B cell (primary cell): ENCODE measurements at regions of chr2 and their contacts with region 1.

Region 1: DNA sequence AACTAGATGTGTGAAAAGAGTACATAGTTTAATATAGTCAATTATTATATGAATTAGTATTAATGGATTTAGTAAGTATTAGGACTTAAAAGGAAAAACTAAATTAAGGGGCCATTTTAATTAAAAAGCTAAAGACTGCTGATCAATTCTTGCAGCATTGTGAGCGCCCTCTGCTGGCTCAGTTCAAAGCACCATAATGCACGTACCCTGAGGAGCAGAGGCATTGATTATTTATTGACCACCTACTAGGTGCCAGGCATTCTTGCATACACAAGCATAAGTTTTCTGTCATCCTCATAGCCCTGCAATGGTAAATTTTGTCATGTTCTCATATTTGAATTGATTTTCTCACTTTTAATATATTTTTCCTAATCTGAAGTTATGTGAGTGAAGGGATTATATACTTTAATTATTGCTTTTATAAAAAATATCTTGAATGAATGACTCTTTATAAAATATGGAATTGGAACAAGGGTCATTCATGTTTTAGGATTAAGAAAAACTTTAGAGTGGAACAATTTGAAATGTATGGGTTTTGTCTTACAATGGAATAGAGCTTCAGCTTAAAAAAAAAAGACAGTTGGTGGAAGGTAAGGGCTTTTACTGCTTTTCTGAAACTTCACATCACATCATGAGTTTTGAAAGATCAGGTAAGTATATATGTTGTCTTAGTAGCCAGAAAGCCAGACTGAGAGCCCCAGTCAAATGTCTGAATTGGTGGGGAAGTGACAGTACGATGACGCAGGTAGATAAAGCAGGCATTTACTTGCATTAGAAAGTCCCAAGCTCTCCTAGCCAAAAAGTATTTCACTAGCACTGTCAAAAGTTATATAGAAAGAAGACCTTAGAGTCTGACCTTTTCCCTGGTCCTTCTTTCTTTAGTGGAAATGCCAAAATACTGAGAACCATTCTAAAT is 9.7 kb downstream of the ITGA4 start:
- DNase-seq: peak; percentile 84
- ATAC-seq: peak; percentile 52
- H3K4me3 ChIP-seq: no peak overlapping the region
- H3K4me3 Mint-ChIP-seq: no peak overlapping the region
- H3K27ac ChIP-seq: peak overlapping the region in 1 of 2 donors; percentile 69
- H3K27ac Mint-ChIP-seq: no peak overlapping the region
- H3K4me1 ChIP-seq: peaks cover 56 to 81% of the 10 kb centered on the region in 2 donors
- H3K4me1 Mint-ChIP-seq: peaks cover 87% of the 10 kb centered on the region
- H3K27me3 ChIP-seq: no peaks in the 10 kb centered on the region
- H3K27me3 Mint-ChIP-seq: no peaks in the 10 kb centered on the region
- CTCF ChIP-seq: peak; percentile 91

Region 2: DNA sequence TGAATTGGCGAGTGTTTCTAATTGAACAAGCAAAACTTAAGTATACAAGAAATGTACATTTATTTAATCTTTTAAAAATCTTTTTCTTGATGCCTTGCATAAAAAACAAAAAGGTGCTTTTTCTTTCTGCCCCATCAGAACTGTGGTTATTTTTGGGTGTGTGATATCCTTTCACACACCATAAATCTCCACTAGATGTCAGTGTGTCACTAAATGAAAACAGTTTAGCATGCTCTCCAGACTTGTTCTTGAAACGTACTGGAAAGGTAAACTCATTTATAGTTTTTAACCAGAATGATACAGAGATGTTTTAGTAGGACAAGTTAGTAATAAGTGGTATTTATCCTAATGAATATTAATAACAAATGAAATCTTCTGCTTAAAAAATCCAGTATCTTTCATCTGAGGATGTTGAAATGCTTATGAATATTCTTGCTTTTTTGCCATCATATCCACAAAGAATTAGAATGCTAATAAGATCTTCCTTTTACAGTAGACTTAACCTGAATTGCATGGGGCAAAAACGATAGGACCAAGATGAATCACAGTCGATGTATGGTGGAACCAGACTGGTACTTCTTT is 389.7 kb before region 1 on chr2:
- CTCF ChIA-PET with region 1: interaction called, 8 read pairs
- POLR2A ChIA-PET with region 1: no interaction called
- intact Hi-C with region 1: loop called (anchors 1 kb)
- DNase-seq: peak; percentile 70
- ATAC-seq: peak; percentile 65
- H3K4me3 ChIP-seq: no peak overlapping the region
- H3K4me3 Mint-ChIP-seq: no peak overlapping the region
- H3K27ac ChIP-seq: no peak overlapping the region
- H3K27ac Mint-ChIP-seq: no peak overlapping the region
- H3K4me1 ChIP-seq: no peaks in the 10 kb centered on the region
- H3K4me1 Mint-ChIP-seq: peaks cover 5% of the 10 kb centered on the region
- H3K27me3 ChIP-seq: no peaks in the 10 kb centered on the region
- H3K27me3 Mint-ChIP-seq: no peaks in the 10 kb centered on the region
- CTCF ChIP-seq: peak; percentile 85

Region 3: DNA sequence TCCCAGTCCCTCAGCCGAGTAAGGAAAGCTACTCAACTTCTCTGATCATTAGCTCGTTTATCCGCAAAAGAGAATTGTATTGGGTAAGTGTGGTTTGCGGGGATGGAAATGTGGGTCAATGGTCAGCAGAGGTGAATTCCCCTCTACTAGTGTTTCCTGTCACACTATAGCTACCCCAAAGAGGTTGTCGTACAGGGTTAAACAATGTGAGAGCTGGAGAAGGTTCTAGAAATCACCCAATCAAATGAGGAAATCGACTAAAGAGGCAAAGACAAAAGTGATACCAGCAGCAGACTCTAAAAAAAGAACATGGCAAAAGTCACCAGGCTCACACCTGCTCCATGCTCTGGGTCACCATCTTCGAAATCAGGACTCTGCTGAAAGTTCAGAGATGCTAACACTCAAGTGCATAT is 154.4 kb before region 1 on chr2:
- CTCF ChIA-PET with region 1: interaction called, 117 read pairs
- POLR2A ChIA-PET with region 1: no interaction called
- intact Hi-C with region 1: loop called (anchors 1 kb)
- DNase-seq: peak; percentile 80
- ATAC-seq: peak; percentile 59
- H3K4me3 ChIP-seq: peak overlapping the region in 4 of 5 experiments; percentile 7 to 38 (median 16)
- H3K4me3 Mint-ChIP-seq: peak overlapping the region; percentile 73
- H3K27ac ChIP-seq: peak overlapping the region; percentile 93 to 96
- H3K27ac Mint-ChIP-seq: peak overlapping the region; percentile 92
- H3K4me1 ChIP-seq: peaks cover 54 to 65% of the 10 kb centered on the region in 2 donors
- H3K4me1 Mint-ChIP-seq: peaks cover 53% of the 10 kb centered on the region
- H3K27me3 ChIP-seq: no peaks in the 10 kb centered on the region
- H3K27me3 Mint-ChIP-seq: no peaks in the 10 kb centered on the region
- CTCF ChIP-seq: no peak

Region 4: GRCh38 chr2:181430406-181431118 is 36.4 kb before region 1 on chr2:
- CTCF ChIA-PET with region 1: interaction called, 15 read pairs
- POLR2A ChIA-PET with region 1: no interaction called
- intact Hi-C with region 1: no loop called
- DNase-seq: peak; percentile 69
- ATAC-seq: peak; percentile 75
- H3K4me3 ChIP-seq: no peak overlapping the region
- H3K4me3 Mint-ChIP-seq: no peak overlapping the region
- H3K27ac ChIP-seq: peak overlapping the region; percentile 51 to 60
- H3K27ac Mint-ChIP-seq: peak overlapping the region; percentile 83
- H3K4me1 ChIP-seq: peaks cover 14% of the 10 kb centered on the region in 2 donors
- H3K4me1 Mint-ChIP-seq: peaks cover 18% of the 10 kb centered on the region
- H3K27me3 ChIP-seq: no peaks in the 10 kb centered on the region
- H3K27me3 Mint-ChIP-seq: no peaks in the 10 kb centered on the region
- CTCF ChIP-seq: peak; percentile 79

Region 5: DNA sequence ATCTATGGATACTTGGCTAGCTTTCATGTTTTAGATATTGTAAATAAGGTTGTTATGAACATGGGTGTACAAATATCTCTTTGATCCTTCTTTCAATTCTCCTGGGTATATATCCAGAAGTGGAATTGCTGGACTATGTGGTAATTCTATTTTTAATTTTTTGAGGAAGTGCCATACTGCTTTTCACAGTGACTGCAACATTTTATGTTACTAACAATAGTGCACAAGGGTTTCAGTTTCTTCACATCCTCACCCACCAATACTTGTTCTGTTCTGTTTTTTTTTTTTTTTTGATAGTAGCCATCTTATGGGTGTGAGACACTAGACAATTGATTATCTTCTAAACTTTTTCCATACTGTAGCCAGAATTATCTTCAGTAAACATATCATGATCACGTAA is 230.7 kb after region 1 on chr2:
- CTCF ChIA-PET with region 1: no interaction called
- POLR2A ChIA-PET with region 1: no interaction called
- intact Hi-C with region 1: no loop called
- DNase-seq: no peak
- ATAC-seq: no peak
- H3K4me3 ChIP-seq: no peak overlapping the region
- H3K4me3 Mint-ChIP-seq: no peak overlapping the region
- H3K27ac ChIP-seq: no peak overlapping the region
- H3K27ac Mint-ChIP-seq: no peak overlapping the region
- H3K4me1 ChIP-seq: no peaks in the 10 kb centered on the region
- H3K4me1 Mint-ChIP-seq: peaks cover 6% of the 10 kb centered on the region
- H3K27me3 ChIP-seq: no peaks in the 10 kb centered on the region
- H3K27me3 Mint-ChIP-seq: peaks cover 19% of the 10 kb centered on the region
- CTCF ChIP-seq: no peak